Prostate gland (tissue), 2 donors: ENCODE measurements at regions of chr3 and their contacts with region 1.

Region 1: DNA sequence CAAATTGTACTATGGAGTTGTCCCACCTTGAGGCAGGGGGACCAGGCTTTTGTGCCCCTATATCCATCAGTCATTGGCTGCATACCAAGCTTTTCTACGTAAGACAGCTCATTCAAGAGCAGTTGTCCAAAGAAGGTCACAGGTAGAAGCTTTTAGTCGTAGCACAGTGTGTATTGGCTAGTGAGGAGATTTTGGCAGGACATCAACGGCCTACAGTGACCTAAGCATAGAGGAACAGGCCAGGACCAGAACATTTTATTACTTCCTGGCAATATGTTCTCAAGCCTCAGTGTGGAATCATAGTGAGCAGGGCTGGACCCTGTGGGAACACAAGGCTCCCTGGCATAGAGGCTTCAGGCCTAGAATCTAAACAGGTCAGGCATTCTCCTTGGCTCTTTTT is 105.4 kb upstream of the ANKRD28 start:
- DNase-seq: peak; percentile 77
- H3K4me3 ChIP-seq: no peak overlapping the region
- H3K27ac ChIP-seq: peak overlapping the region; percentile 59 to 74
- H3K4me1 ChIP-seq: peaks cover 2% of the 10 kb centered on the region
- H3K27me3 ChIP-seq: no peaks in the 10 kb centered on the region
- CTCF ChIP-seq: no peak
- POLR2A ChIP-seq: no peak

Region 2: DNA sequence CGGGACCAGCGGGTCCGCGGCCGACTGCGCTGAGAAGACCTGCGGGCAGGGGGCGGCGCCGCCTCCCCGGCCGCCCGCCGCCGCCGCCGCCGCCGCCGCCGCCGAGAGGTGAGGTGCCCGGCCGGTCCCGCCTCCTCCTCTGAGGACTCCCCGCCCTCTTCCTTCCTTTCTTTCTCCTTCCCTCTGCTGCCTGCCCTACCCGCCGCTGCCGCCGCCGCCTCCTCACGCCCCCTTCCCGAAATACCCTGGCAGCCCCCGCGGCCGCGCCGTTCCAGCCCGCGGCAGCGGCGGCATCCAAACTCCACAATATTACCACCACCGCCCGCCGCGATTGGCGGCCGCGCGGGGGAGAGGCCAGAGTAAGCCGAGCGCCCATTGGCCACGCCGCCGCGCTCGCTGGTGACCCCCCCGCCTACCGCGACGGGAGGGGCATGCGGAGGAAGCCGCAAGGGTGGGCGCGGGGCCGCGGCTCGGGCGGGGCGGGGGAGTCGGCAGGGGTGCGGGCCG is 43.6 kb before region 1 on chr3:
- intact Hi-C with region 1: loop called (anchors 2 kb)
- DNase-seq: peak; percentile 85
- H3K4me3 ChIP-seq: peak overlapping the region; percentile 94
- H3K27ac ChIP-seq: peak overlapping the region; percentile 82 to 85
- H3K4me1 ChIP-seq: no peaks in the 10 kb centered on the region
- H3K27me3 ChIP-seq: no peaks in the 10 kb centered on the region
- CTCF ChIP-seq: peak in 2 of 4 experiments; percentile 40 to 46
- POLR2A ChIP-seq: peak; percentile 69

Region 3: GRCh38 chr3:15964605-15965442 is 61.7 kb after region 1 on chr3:
- intact Hi-C with region 1: no loop called
- DNase-seq: no peak
- H3K4me3 ChIP-seq: no peak overlapping the region
- H3K27ac ChIP-seq: no peak overlapping the region
- H3K4me1 ChIP-seq: no peaks in the 10 kb centered on the region
- H3K27me3 ChIP-seq: no peaks in the 10 kb centered on the region
- CTCF ChIP-seq: no peak
- POLR2A ChIP-seq: no peak